Activated T-helper 2 cell treated with anti-CD3 and anti-CD28 coated beads, Interferon-gamma antibody, Interleukin-2, Interleukin-4, amounts not matched to agents 10 μg/mL and 5 μg/mL and 100 μg/mL, durations not matched to agents 14 hours and 24 hours and 36 hours (primary cell): ENCODE measurements at regions of chr3 and their contacts with region 1.

Region 1: GRCh38 chr3:49276475-49277382 is at the start of gene C3orf62:
- DNase-seq: peak; percentile 71
- H3K4me3 Mint-ChIP-seq: peak within 1 kb of the TSS; percentile 80
- H3K27ac Mint-ChIP-seq: peak within 1 kb of the TSS; percentile 90
- H3K4me1 Mint-ChIP-seq: peaks cover 30% of the 10 kb centered on the region
- H3K27me3 Mint-ChIP-seq: no peaks in the 10 kb centered on the region
- total RNA-seq, gene C3orf62: 7.7 and 7.8 TPM in 2 replicates

Region 2: DNA sequence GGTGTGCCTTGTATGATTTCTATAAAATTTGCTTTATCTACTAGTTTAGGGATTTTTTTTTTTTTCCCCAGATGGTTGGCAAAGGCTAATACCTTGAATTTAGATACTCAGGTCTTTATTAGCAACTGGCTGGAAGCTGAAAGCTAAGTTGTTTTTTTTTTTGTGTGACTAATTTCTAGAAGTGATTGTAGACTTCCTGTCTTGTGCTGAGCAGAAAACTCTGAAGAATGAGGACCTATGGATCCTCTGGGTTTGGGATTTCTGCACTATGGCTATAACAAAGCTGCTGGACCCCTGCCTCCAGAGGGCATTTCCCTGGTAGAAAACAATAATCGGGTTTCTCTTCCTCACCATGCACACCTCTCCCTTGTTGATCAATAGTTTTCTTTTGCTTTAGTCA is 348.1 kb before region 1 on chr3:
- intact Hi-C with region 1: no loop called
- DNase-seq: no peak
- H3K4me3 Mint-ChIP-seq: peak overlapping the region; percentile 51
- H3K27ac Mint-ChIP-seq: peak overlapping the region; percentile 86
- H3K4me1 Mint-ChIP-seq: peaks cover 64% of the 10 kb centered on the region
- H3K27me3 Mint-ChIP-seq: no peaks in the 10 kb centered on the region

Region 3: DNA sequence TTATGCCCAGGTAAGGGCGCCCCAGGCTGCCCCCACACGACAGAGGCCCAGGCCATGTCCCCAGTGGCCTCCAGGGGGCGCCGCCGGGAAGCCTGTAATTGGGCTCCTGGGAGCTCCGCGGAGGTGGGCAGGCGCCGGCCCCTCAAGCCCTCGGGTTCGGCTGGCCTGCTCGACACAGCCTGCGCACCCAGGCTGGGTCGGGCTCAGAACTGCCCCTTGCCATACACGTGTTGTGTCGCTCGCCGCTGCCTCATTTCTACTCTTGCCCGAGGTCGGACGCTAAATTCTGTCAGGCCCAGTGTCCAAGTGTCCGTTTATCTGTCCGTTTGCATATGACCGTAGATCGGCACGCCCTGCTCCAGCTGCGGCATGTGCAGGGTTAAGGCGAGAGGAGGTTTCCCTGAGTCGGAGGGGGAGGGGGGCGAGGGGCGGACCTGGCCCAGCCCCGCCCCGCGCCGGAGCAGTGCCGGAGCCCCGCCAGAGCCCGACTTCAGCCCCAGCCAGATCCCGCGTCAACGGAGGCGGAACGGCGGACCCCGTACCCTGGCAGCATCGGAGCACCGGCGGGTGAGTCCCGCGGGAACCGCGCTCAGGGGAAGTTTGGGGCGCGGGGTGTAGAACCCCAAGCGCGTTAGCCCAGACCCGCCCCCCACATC is 105.5 kb before region 1 on chr3 and contains the start of gene KLHDC8B:
- intact Hi-C with region 1: loop called (anchors 10 kb)
- DNase-seq: peak; percentile 73
- H3K4me3 Mint-ChIP-seq: peak within 1 kb of the TSS; percentile 84
- H3K27ac Mint-ChIP-seq: peak within 1 kb of the TSS; percentile 48
- H3K4me1 Mint-ChIP-seq: peaks cover 8% of the 10 kb centered on the region
- H3K27me3 Mint-ChIP-seq: no peaks in the 10 kb centered on the region
- total RNA-seq, gene KLHDC8B: 2.5 and 2.6 TPM in 2 replicates

Region 4: DNA sequence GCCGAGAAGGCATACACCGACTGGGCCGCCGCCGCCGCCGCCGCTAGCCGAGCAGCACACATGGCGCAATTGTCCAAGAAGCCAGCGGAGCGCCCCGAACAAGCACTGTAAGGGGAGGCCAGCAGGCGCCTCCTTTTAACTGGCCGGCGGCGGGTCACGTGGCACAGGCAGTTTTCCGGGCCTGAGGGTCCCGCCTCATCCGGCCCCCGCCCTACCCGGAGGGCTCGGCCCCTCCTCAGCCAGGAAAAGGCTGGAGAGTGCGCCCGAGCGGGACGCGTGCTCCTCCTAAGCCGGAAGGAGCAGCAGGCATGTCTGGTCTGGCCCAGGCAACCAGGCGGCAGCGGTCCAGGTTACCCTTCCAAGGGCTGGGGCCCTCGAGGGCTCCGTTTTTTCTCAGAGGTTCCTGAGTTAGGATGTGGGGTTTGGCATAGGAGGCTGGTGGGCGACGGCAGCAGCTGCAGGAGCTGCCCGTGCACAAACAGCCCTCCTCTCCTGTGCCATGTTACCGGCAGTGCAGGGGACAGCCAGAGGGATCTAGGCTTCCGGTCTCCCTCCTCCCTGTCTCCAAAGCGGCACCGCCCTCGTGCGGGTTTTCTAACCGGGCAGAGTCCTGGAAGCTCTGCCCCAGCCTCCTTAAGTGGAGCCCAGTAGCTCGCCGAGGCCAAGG is 81.6 kb after region 1 on chr3 and contains the start of gene GPX1:
- intact Hi-C with region 1: loop called (anchors 5 kb)
- DNase-seq: peak; percentile 82
- H3K4me3 Mint-ChIP-seq: peak within 1 kb of the TSS; percentile 97
- H3K27ac Mint-ChIP-seq: peak within 1 kb of the TSS; percentile 88
- H3K4me1 Mint-ChIP-seq: peaks cover 17% of the 10 kb centered on the region
- H3K27me3 Mint-ChIP-seq: no peaks in the 10 kb centered on the region
- total RNA-seq, gene GPX1: 168 and 173 TPM in 2 replicates

Region 5: DNA sequence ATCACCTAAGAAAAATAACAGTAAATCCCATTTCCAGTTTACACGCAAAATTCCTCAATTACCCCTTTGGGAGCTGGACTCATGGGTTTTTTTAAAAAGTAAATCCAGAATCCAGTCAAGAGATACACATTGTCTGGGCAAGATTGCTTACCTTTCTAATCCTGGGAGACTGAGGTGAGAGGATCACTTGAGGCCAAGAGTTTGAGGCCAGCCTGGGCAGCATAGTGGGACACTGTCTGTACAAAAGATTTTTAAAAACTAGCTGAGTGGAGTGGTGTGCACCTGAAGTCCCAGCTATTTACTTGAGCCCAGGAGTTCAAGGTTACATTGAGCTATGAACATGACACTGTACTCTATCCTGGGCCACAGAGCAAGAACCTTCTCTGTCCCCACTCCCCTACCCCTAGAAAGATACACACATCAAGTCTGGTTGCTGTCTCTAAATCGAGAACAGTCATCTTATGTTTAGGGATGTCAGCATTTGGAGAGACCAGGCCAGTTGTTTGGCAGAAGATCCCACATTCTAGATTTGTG is 232.4 kb after region 1 on chr3:
- intact Hi-C with region 1: no loop called
- DNase-seq: no peak
- H3K4me3 Mint-ChIP-seq: no peak overlapping the region
- H3K27ac Mint-ChIP-seq: no peak overlapping the region
- H3K4me1 Mint-ChIP-seq: no peaks in the 10 kb centered on the region
- H3K27me3 Mint-ChIP-seq: no peaks in the 10 kb centered on the region